ENCODE measurements at regions of chr14 and their contacts with region 1.

Region 1: DNA sequence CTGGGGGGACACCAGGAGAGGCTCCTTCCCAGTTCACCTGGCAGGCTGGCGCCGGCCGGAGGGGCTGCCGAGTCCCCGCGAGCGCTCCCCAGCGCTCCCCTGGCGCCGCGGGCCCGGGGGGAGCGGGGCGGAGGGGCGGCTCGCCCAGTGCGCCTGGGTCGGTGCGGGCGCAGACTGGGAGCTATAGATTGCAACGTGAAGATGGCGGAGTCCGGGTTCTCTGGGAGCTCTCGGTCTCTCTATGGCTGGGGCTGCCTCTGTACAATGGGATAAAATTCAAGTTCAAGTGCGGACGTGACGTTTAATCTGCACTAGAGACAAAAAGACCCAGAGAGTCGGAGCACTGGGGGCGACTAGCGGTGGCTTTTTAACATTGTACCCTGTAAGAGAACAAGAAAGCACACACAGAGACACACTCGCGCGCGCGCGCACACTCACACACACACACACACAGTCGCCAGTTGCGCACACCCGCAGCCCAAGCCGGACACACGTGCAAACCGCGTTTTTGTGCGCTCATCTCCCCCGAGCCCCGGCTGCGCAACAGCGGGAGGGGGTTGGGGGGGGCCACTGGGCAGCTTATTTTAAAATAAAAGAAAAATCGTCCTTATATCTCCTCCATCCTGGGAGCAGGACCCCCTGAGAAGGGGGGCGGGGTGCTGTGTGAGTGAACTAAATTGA is at the start of gene BCL11B:
- DNase-seq: peak; percentile 95
- H3K4me3 Mint-ChIP-seq: peak within 1 kb of the TSS; percentile 96
- H3K27ac Mint-ChIP-seq: peak within 1 kb of the TSS; percentile 100
- H3K4me1 Mint-ChIP-seq: peaks cover 29% of the 10 kb centered on the region
- H3K27me3 Mint-ChIP-seq: peaks cover 3% of the 10 kb centered on the region
- total RNA-seq, gene BCL11B: 48.9 to 49.1 TPM

Region 2: GRCh38 chr14:97994020-97994531 is 1278.0 kb before region 1 on chr14:
- CTCF ChIA-PET with region 1: interaction called, 3 read pairs
- POLR2A ChIA-PET with region 1: no interaction called
- intact Hi-C with region 1: loop called (anchors 5 kb)
- DNase-seq: peak; percentile 59
- H3K4me3 Mint-ChIP-seq: peak overlapping the region; percentile 34
- H3K27ac Mint-ChIP-seq: peak overlapping the region; percentile 94
- H3K4me1 Mint-ChIP-seq: peaks cover 55% of the 10 kb centered on the region
- H3K27me3 Mint-ChIP-seq: no peaks in the 10 kb centered on the region

Region 3: DNA sequence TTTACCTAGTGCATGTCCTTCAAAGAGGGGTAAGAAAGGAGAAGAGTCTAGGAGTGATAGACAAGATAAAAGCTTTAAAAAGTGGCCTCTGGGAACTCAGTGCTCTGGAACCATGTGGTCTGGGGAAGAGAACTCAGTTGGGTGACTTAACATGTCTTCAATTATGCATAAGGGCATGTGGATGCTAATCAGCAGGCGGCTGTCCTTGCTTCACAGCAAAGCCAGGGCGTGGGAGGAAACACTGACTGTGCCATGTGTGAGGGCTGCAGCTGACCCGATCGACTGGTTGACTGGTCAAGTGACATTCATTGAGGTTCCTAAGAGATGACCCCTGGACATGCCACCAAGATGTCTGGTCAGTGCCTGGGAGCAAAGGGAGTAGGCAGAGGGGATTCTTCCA is 1053.9 kb before region 1 on chr14:
- CTCF ChIA-PET with region 1: no interaction called
- POLR2A ChIA-PET with region 1: no interaction called
- intact Hi-C with region 1: loop called (anchors 5 kb)
- DNase-seq: no peak
- H3K4me3 Mint-ChIP-seq: no peak overlapping the region
- H3K27ac Mint-ChIP-seq: no peak overlapping the region
- H3K4me1 Mint-ChIP-seq: peaks cover 32% of the 10 kb centered on the region
- H3K27me3 Mint-ChIP-seq: no peaks in the 10 kb centered on the region

Region 4: DNA sequence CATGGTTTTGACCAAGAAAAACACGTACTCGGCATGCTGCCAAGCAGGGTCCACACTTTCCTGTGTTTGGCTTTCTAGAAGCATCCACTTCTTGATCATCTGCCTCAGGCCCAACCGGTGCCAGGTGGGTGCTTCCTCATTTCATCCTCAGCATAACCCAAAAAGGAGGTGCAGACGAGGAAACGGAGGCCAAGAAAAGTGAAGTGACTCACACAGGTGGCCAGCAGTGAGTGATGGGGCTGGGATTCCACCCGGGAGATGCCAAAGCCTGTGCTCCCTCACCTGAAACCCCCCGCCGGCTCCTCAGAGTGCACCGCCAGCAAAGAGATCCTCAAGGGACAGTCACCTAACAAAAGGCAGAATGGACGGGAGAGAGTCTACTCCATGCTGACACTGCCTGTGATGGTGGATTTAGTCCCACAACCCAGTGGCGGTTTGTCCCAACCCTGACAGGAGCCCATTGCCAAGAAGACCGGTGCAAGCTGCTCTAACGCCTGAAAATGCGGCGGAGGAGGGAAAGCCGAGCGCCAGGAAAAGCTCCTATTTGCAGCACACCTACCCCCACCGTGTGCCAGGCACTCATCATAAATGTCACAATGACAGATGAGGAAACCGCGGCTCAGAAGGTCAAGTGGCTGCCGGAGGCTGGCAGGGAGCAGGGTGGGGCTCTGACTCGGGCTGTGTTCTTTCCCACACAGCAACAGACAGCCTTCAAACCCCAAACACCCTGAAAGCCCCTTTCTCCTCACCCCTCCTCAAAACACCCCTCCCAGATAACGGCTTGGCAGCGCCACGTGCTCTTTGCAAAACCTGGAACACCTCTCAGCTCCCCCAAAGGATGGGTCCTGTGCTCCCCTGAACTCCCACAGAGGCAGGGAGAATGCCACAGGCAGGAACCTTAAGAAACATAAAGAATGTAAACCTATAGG is 18.9 kb before region 1 on chr14:
- CTCF ChIA-PET with region 1: interaction called, 5 read pairs
- POLR2A ChIA-PET with region 1: interaction called, 425 read pairs
- intact Hi-C with region 1: no loop called
- DNase-seq: peak; percentile 77
- H3K4me3 Mint-ChIP-seq: peak overlapping the region; percentile 70
- H3K27ac Mint-ChIP-seq: peak overlapping the region; percentile 87
- H3K4me1 Mint-ChIP-seq: peaks cover 94% of the 10 kb centered on the region
- H3K27me3 Mint-ChIP-seq: no peaks in the 10 kb centered on the region